Right ventricle myocardium inferior (tissue), 1 donor: ENCODE measurements at regions of chr20 and their contacts with region 1.

Region 1: GRCh38 chr20:47620808-47621805 is 119.4 kb downstream of the NCOA3 start:
- DNase-seq: no peak
- ATAC-seq: no peak

Region 2: DNA sequence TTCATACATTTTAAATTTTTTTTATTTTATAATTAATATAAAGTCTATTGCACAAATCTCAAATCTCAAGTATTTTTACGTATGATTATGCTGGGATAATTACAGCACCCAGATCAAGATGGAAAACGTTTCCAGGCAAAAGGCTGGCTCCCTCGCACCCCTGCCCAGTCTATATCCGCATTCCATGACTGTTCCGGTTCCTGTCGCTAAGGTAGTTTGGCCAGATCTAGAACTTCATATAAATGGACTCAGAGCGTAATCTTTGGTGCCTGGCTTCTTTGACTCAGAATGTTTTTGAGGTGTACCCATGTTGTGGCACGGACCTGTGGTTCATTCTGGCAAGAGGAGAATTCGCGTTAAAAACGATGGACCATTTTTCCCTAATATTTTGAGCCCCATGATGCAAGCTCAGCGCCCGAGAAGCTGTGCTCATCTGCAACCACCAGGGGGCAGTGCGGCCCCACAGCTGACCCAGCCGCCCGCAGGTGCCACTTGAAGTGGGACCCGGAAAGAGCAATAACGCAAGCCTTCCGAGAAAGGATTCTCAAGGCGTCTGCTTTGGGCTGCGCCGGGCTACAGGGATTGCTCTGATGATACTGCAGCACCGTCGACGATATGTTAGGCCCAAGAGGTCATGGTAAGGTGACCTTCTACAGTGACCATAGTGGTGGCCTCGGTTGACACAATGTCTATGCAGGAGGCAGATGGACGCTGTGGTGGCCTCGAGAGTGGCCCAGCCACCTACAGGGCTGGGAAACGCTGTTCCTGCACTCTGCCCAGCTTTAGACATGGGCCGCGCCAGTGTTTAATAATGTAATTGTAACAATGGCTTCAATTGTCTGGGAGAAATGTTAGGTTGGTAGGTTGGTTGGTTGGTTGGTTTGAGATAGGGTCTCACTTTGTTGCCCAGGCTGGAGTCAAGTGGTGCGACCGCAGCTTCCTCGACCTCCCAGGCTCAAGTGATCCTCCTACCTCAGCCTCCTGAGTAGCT is 424.7 kb before region 1 on chr20:
- intact Hi-C with region 1: loop called (anchors 5 kb)
- DNase-seq: peak; percentile 89
- ATAC-seq: peak; percentile 76

Region 3: GRCh38 chr20:47529840-47530239 is 91.3 kb before region 1 on chr20:
- intact Hi-C with region 1: no loop called
- DNase-seq: no peak
- ATAC-seq: no peak

Region 4: GRCh38 chr20:47663333-47664067 is 42.4 kb after region 1 on chr20:
- intact Hi-C with region 1: no loop called
- DNase-seq: peak; percentile 92
- ATAC-seq: peak; percentile 82